ENCODE measurements at regions of chr10 and their contacts with region 1.

Region 1: GRCh38 chr10:4813023-4813422 is 13.0 kb upstream of the AKR1E2 start:
- DNase-seq: no peak
- ATAC-seq: peak; percentile 35
- H3K4me3 ChIP-seq: no peak overlapping the region
- H3K4me3 Mint-ChIP-seq: no peak overlapping the region
- H3K27ac ChIP-seq: no peak overlapping the region
- H3K27ac Mint-ChIP-seq: no peak overlapping the region
- H3K4me1 ChIP-seq: no peaks in the 10 kb centered on the region
- H3K4me1 Mint-ChIP-seq: peaks cover 0 to 4% (median 0%) of the 10 kb centered on the region in 7 donors
- H3K27me3 ChIP-seq: no peaks in the 10 kb centered on the region
- H3K27me3 Mint-ChIP-seq: peaks cover 0 to 14% (median 8%) of the 10 kb centered on the region in 5 donors

Region 2: DNA sequence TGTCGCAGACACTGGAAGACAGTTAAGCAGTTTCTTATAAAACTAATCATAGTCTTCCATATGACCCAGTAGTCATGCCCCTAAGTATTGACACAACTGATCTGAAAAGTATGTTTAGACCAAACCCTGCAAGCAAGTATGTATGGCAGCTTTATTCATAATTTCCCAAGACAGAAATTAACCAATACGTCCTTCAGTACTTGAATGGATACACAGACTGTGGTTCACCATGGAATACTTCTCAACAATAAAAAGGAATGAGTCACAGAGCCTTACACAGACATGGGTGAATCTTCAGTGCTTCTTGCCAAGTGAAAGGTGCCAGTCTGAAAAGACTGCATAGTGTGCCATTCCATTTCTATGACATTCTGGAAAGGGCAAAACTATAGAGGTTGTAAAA is 37.2 kb before region 1 on chr10:
- CTCF ChIA-PET with region 1: no interaction called
- POLR2A ChIA-PET with region 1: no interaction called
- intact Hi-C with region 1: no loop called
- DNase-seq: no peak
- ATAC-seq: no peak
- H3K4me3 ChIP-seq: no peak overlapping the region
- H3K4me3 Mint-ChIP-seq: no peak overlapping the region
- H3K27ac ChIP-seq: no peak overlapping the region
- H3K27ac Mint-ChIP-seq: no peak overlapping the region
- H3K4me1 ChIP-seq: no peaks in the 10 kb centered on the region
- H3K4me1 Mint-ChIP-seq: no peaks in the 10 kb centered on the region
- H3K27me3 ChIP-seq: peaks cover 0 to 3% of the 10 kb centered on the region in 2 donors
- H3K27me3 Mint-ChIP-seq: peaks cover 27 to 55% (median 34%) of the 10 kb centered on the region in 5 donors

Region 3: DNA sequence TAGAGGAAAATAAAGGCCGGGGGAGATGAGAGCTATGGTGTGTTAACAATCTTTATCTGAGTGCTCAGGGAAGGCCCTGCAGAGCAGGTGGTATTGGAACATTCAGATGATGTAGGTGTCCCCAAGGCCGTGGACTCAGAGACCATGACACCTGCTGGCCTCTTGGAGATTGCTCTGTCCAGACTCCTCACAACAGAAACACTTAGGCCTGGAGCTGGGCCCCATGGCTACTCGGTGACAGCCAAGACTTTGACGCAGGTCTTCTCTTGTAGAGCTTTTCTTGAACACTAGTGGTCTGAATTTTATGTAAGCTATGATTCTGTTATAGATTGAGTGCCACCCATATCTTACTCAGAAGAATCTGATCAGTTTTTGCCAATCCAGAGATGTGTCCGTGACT is 26.4 kb after region 1 on chr10:
- CTCF ChIA-PET with region 1: interaction called, 34 read pairs
- POLR2A ChIA-PET with region 1: interaction called, 4 read pairs
- intact Hi-C with region 1: loop called in 1 of 2 experiments (anchors 2 kb)
- DNase-seq: no peak
- ATAC-seq: no peak
- H3K4me3 ChIP-seq: no peak overlapping the region
- H3K4me3 Mint-ChIP-seq: no peak overlapping the region
- H3K27ac ChIP-seq: no peak overlapping the region
- H3K27ac Mint-ChIP-seq: peak overlapping the region in 7 of 9 donors; percentile 9 to 71 (median 16)
- H3K4me1 ChIP-seq: peaks cover 0 to 36% of the 10 kb centered on the region in 2 donors
- H3K4me1 Mint-ChIP-seq: peaks cover 17 to 48% (median 30%) of the 10 kb centered on the region in 7 donors
- H3K27me3 ChIP-seq: no peaks in the 10 kb centered on the region
- H3K27me3 Mint-ChIP-seq: peaks cover 0 to 3% (median 0%) of the 10 kb centered on the region in 5 donors

Region 4: GRCh38 chr10:5094265-5095205 is 281.5 kb after region 1 on chr10 and contains the start of gene AKR1C3:
- CTCF ChIA-PET with region 1: interaction called, 13 read pairs
- POLR2A ChIA-PET with region 1: no interaction called
- intact Hi-C with region 1: loop called (anchors 1 kb)
- DNase-seq: peak in 6 of 9 donors; percentile 24 to 53 (median 36)
- ATAC-seq: peak; percentile 77
- H3K4me3 ChIP-seq: peak within 1 kb of the TSS; percentile 69
- H3K4me3 Mint-ChIP-seq: peak within 1 kb of the TSS; percentile 71 to 95 (median 91)
- H3K27ac ChIP-seq: no peak within 1 kb of the TSS
- H3K27ac Mint-ChIP-seq: peak within 1 kb of the TSS in 6 of 9 donors; percentile 35 to 90 (median 61)
- H3K4me1 ChIP-seq: no peaks in the 10 kb centered on the region
- H3K4me1 Mint-ChIP-seq: peaks cover 0 to 25% (median 15%) of the 10 kb centered on the region in 7 donors
- H3K27me3 ChIP-seq: no peaks in the 10 kb centered on the region
- H3K27me3 Mint-ChIP-seq: peaks cover 0 to 44% (median 13%) of the 10 kb centered on the region in 5 donors
- total RNA-seq, gene AKR1C3: 2.9 to 14.1 (median 5.8) TPM

Region 5: DNA sequence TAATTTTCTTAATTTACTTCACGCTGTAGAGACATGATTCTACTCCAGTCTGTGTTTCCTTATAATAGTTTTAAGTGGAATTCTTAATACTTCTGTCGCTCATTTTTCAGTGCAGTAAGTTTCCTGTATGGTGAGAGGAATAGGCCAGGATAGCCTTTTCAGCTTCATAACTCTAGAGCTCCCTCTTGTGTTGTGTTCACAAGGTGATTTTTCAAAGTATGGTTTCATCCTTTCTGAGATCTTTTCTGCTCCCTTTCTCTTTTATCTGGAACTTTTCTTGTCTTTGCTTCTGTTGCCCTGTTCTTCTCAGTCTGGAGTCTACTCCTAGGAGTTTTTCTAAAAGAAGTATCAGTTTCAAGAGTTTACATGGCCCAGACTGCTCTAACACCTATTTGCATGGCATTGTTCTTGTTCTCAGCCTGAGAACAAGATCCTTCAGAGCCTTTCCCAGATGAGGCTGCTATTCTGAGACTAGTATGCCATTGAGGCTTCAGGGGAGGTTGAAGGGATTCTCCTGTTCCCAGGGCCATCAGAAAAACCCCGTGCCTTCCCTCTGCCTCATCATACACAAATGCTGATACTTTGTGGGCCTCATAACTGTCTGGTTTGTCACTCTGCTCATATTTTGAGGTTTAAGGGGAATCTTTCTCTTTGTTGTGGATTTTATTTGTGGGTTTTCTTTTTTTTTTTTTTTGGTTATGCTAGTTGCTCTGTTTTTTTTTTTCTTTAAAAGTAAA is 621.2 kb after region 1 on chr10:
- CTCF ChIA-PET with region 1: interaction called, 25 read pairs
- POLR2A ChIA-PET with region 1: no interaction called
- intact Hi-C with region 1: loop called (anchors 1 kb)
- DNase-seq: peak in 5 of 9 donors; percentile 31 to 54 (median 38)
- ATAC-seq: peak; percentile 84
- H3K4me3 ChIP-seq: no peak overlapping the region
- H3K4me3 Mint-ChIP-seq: peak overlapping the region in 3 of 10 donors; percentile 8 to 25 (median 10)
- H3K27ac ChIP-seq: no peak overlapping the region
- H3K27ac Mint-ChIP-seq: peak overlapping the region in 4 of 9 donors; percentile 49 to 81 (median 56)
- H3K4me1 ChIP-seq: peaks cover 0 to 10% of the 10 kb centered on the region in 2 donors
- H3K4me1 Mint-ChIP-seq: peaks cover 4 to 15% (median 11%) of the 10 kb centered on the region in 7 donors
- H3K27me3 ChIP-seq: peaks cover 0 to 3% of the 10 kb centered on the region in 2 donors
- H3K27me3 Mint-ChIP-seq: no peaks in the 10 kb centered on the region

Region 6: GRCh38 chr10:5873515-5873995 is 1060.5 kb after region 1 on chr10:
- CTCF ChIA-PET with region 1: no interaction called
- POLR2A ChIA-PET with region 1: no interaction called
- intact Hi-C with region 1: loop called in 1 of 2 experiments (anchors 10 kb)
- DNase-seq: peak; percentile 42 to 76 (median 67)
- ATAC-seq: peak; percentile 96
- H3K4me3 ChIP-seq: no peak overlapping the region
- H3K4me3 Mint-ChIP-seq: peak overlapping the region in 8 of 10 donors; percentile 46 to 76 (median 58)
- H3K27ac ChIP-seq: no peak overlapping the region
- H3K27ac Mint-ChIP-seq: peak overlapping the region in 2 of 9 donors; percentile 60 to 74
- H3K4me1 ChIP-seq: no peaks in the 10 kb centered on the region
- H3K4me1 Mint-ChIP-seq: peaks cover 2 to 10% (median 5%) of the 10 kb centered on the region in 7 donors
- H3K27me3 ChIP-seq: no peaks in the 10 kb centered on the region
- H3K27me3 Mint-ChIP-seq: peaks cover 0 to 4% (median 0%) of the 10 kb centered on the region in 5 donors